ENCODE measurements at regions of chr5 and their contacts with region 1.

Region 1: DNA sequence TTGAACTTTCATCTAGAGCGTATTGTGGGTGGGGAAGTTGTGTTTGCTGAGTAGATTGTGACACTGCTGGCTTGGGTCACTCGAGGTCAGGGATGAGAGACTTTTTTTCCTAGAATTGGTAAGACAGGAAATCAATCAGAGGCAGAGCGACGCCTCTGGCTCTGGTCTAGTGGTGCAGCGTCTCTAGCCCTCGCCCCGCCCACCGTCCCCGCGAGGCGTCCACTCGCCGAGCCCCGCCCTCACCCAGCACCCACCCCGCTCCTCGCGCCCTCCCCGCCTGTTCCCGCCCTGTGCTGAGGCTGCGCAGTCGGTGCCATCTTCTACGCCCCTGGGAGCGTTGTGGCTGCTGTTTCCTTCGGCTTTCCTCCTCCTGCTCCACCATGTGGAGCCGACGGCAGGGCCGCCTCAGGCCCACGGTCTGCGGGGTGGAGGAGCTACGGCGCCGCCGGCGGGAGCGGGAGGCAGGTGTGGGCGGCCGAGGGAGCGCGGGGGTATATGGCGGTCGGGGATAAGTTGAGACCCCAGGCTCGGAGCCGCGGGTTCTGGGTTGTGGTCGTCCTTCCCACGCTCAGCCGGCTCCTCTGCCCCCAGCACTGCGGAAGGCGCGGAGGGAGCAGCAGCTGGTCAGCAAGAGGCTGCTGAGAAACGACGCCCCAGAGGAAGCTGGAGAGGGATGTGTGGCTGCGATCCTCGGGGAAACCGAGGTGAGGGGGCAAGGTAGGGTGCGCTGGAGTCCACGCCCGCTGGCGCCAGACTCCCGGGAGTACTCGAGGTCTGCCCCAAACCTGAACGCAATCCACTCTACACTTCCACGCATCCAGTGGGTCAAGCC is at the start of gene TMCO6:
- DNase-seq: peak; percentile 91
- H3K4me3 ChIP-seq: peak within 1 kb of the TSS; percentile 76
- H3K27ac ChIP-seq: peak within 1 kb of the TSS; percentile 25
- H3K4me1 ChIP-seq: peaks cover 11% of the 10 kb centered on the region
- CTCF ChIP-seq: peak; percentile 70
- total RNA-seq, gene TMCO6: 15.4 and 26.9 TPM in 2 replicates

Region 2: GRCh38 chr5:140372971-140373487 is 266.3 kb before region 1 on chr5:
- CTCF ChIA-PET with region 1: no interaction called
- POLR2A ChIA-PET with region 1: no interaction called
- intact Hi-C with region 1: loop called (anchors 5 kb)
- DNase-seq: peak; percentile 56
- H3K4me3 ChIP-seq: no peak overlapping the region
- H3K27ac ChIP-seq: no peak overlapping the region
- H3K4me1 ChIP-seq: no peaks in the 10 kb centered on the region
- CTCF ChIP-seq: peak; percentile 87

Region 3: GRCh38 chr5:140401362-140402257 is 237.8 kb before region 1 on chr5 and contains the start of gene ANKHD1:
- CTCF ChIA-PET with region 1: no interaction called
- POLR2A ChIA-PET with region 1: interaction called, 4 read pairs
- intact Hi-C with region 1: loop called (anchors 1 kb)
- DNase-seq: peak; percentile 100
- H3K4me3 ChIP-seq: peak within 1 kb of the TSS; percentile 92
- H3K27ac ChIP-seq: peak within 1 kb of the TSS; percentile 82
- H3K4me1 ChIP-seq: peaks cover 29% of the 10 kb centered on the region
- CTCF ChIP-seq: no peak
- total RNA-seq, gene ANKHD1: 90.6 and 91.5 TPM in 2 replicates

Region 4: GRCh38 chr5:140481758-140482157 is 157.6 kb before region 1 on chr5:
- CTCF ChIA-PET with region 1: no interaction called
- POLR2A ChIA-PET with region 1: no interaction called
- intact Hi-C with region 1: no loop called
- DNase-seq: no peak
- H3K4me3 ChIP-seq: no peak overlapping the region
- H3K27ac ChIP-seq: no peak overlapping the region
- H3K4me1 ChIP-seq: no peaks in the 10 kb centered on the region
- CTCF ChIP-seq: no peak

Region 5: GRCh38 chr5:140540227-140540626 is 99.1 kb before region 1 on chr5:
- CTCF ChIA-PET with region 1: no interaction called
- POLR2A ChIA-PET with region 1: no interaction called
- intact Hi-C with region 1: no loop called
- DNase-seq: no peak
- H3K4me3 ChIP-seq: no peak overlapping the region
- H3K27ac ChIP-seq: no peak overlapping the region
- H3K4me1 ChIP-seq: no peaks in the 10 kb centered on the region
- CTCF ChIP-seq: no peak

Region 6: GRCh38 chr5:140557136-140557805 is 82.1 kb before region 1 on chr5 and contains the start of gene SRA1:
- CTCF ChIA-PET with region 1: no interaction called
- POLR2A ChIA-PET with region 1: no interaction called
- intact Hi-C with region 1: loop called (anchors 2 kb)
- DNase-seq: peak; percentile 89
- H3K4me3 ChIP-seq: peak within 1 kb of the TSS; percentile 82
- H3K27ac ChIP-seq: peak within 1 kb of the TSS; percentile 46
- H3K4me1 ChIP-seq: peaks cover 23% of the 10 kb centered on the region
- CTCF ChIP-seq: no peak
- total RNA-seq, gene SRA1: 18.8 and 19.1 TPM in 2 replicates

Region 7: GRCh38 chr5:140564196-140565023 is 75.0 kb before region 1 on chr5 and contains the starts of genes APBB3 and SLC35A4:
- CTCF ChIA-PET with region 1: interaction called, 3 read pairs
- POLR2A ChIA-PET with region 1: interaction called, 3 read pairs
- intact Hi-C with region 1: loop called (anchors 2 kb)
- DNase-seq: peak; percentile 96
- H3K4me3 ChIP-seq: peak within 1 kb of the TSS; percentile 87
- H3K27ac ChIP-seq: peak within 1 kb of the TSS; percentile 45
- H3K4me1 ChIP-seq: peaks cover 25% of the 10 kb centered on the region
- CTCF ChIP-seq: no peak
- total RNA-seq, gene APBB3: 22.7 and 37.9 TPM in 2 replicates
- total RNA-seq, gene SLC35A4: 19.6 and 29.1 TPM in 2 replicates

Measured in OCI-LY7 (cell line).